ENCODE measurements at regions of chr20 and their contacts with region 1.

Region 1: GRCh38 chr20:60123652-60124051 is 165.4 kb downstream of the CDH26 start:
- DNase-seq: no peak
- H3K4me3 ChIP-seq: no peak overlapping the region
- H3K27ac ChIP-seq: no peak overlapping the region
- H3K27me3 ChIP-seq: peaks cover 0 to 8% (median 0%) of the 10 kb centered on the region in 45 donors
- CTCF ChIP-seq: no peak

Region 2: GRCh38 chr20:60057123-60057801 is 66.4 kb before region 1 on chr20:
- intact Hi-C with region 1: no loop called
- DNase-seq: peak in 9 of 10 donors; percentile 46 to 77 (median 66)
- H3K4me3 ChIP-seq: peak overlapping the region in 24 of 59 donors; percentile 1 to 46 (median 26)
- H3K27ac ChIP-seq: peak overlapping the region in 8 of 59 donors; percentile 20 to 56 (median 34)
- H3K27me3 ChIP-seq: peaks cover 0 to 8% (median 0%) of the 10 kb centered on the region in 45 donors
- CTCF ChIP-seq: peak; percentile 70 to 94 (median 87)

Region 3: DNA sequence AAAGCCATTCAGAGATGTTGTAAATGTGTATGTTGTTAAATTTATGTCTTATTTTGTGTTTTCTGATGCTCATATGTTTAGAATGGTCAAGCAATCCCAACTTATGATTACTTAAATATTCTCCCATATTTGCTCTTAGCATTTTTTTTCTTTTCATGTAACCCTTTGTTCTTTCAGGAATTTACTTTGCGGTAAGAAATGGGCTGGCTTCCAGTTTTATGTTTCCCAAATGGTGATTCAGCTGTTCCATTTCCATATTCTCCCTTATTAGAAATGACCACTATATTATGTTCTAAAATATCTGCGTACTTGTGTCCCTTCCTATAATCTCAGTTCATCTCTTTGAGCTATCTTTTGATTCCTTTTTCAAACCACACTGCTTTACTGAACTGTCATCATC is 51.7 kb before region 1 on chr20:
- intact Hi-C with region 1: loop called in 1 of 2 experiments (anchors 5 kb)
- DNase-seq: no peak
- H3K4me3 ChIP-seq: no peak overlapping the region
- H3K27ac ChIP-seq: no peak overlapping the region
- H3K27me3 ChIP-seq: peaks cover 0 to 11% (median 0%) of the 10 kb centered on the region in 45 donors
- CTCF ChIP-seq: no peak

Region 4: DNA sequence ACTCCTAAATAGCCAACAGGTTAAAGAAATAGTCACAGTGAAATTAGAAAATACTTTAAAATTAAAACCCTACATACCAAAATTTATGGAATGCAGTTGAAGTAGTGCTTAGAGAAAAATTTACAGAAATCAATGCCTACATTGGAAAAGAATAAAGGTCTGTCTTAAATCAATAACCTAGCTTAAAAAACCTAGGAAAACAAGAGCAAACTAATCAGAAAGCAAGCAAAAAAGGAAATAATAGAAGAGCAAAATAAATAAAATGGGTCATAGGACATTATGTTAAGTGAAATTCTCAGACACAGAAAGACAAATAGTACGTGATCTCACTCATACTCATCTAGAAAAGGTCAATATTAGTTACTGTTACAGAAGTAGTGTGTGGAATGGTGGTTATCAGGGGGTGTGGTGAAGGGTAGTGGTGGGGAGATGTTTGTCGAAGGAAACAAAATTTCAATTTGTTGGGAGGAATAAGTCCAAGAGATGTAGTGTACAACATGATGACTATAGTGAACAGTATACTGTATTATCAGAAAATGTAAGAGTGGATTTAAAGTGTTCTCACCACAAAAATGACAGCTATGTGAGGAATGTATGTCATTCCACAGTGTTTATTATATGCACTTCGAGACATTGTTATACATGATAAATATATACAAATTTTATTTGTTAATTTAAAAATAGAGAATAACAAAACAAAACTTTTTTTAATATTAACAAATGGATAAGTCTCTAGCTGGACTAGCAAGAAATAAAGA is 258.2 kb after region 1 on chr20:
- intact Hi-C with region 1: no loop called
- DNase-seq: no peak
- H3K4me3 ChIP-seq: no peak overlapping the region
- H3K27ac ChIP-seq: no peak overlapping the region
- H3K27me3 ChIP-seq: no peaks in the 10 kb centered on the region
- CTCF ChIP-seq: no peak

Measured in dorsolateral prefrontal cortex (tissue), 120 donors.